Activated T-helper 2 cell treated with anti-CD3 and anti-CD28 coated beads, Interferon-gamma antibody, Interleukin-2, Interleukin-4, amounts not matched to agents 10 μg/mL and 5 μg/mL and 100 μg/mL, durations not matched to agents 14 hours and 24 hours and 36 hours (primary cell): ENCODE measurements at regions of chrX and their contacts with region 1.

Region 1: GRCh38 chrX:51608126-51608525 is 10.6 kb downstream of the CENPVL3 start:
- DNase-seq: no peak
- H3K4me3 Mint-ChIP-seq: no peak overlapping the region
- H3K27ac Mint-ChIP-seq: peak overlapping the region; percentile 70
- H3K4me1 Mint-ChIP-seq: peaks cover 10% of the 10 kb centered on the region
- H3K27me3 Mint-ChIP-seq: peaks cover 2% of the 10 kb centered on the region

Region 2: GRCh38 chrX:51487960-51488267 is 120.2 kb before region 1 on chrX:
- intact Hi-C with region 1: loop called (anchors 5 kb)
- DNase-seq: no peak
- H3K4me3 Mint-ChIP-seq: no peak overlapping the region
- H3K27ac Mint-ChIP-seq: no peak overlapping the region
- H3K4me1 Mint-ChIP-seq: no peaks in the 10 kb centered on the region
- H3K27me3 Mint-ChIP-seq: no peaks in the 10 kb centered on the region